PC-9 (cell line): ENCODE measurements at regions of chr12 and their contacts with region 1.

Region 1: GRCh38 chr12:9673404-9674225 is 4.1 kb downstream of the CLEC2D start:
- DNase-seq: peak; percentile 95 to 96
- H3K4me3 ChIP-seq: peak overlapping the region; percentile 5; the same call in 1 of the 2 replicates
- H3K27ac ChIP-seq: peak overlapping the region; percentile 79
- H3K4me1 ChIP-seq: peaks cover 35% of the 10 kb centered on the region
- H3K27me3 ChIP-seq: no peaks in the 10 kb centered on the region
- CTCF ChIP-seq: no peak

Region 2: DNA sequence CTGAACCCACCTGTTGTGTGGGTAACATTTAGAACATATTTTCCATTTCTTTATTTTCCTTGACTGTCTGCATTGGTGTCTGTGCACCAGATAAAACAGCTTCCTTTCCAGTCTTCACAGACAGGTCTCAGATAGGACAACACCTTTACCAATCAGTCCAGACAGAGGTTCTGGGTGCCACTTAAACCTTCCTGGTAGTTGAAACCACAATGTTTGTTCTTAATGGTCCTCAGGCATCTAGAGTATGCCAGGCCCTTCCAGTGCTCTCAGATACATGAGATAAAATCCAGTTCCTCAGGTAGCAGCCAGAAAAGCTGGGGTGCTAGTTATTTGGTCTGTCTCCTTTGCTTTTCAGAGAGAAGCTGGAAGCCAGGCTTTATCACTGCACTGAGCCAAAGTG is 11.1 kb before region 1 on chr12:
- CTCF ChIA-PET with region 1: interaction called, 4 read pairs
- POLR2A ChIA-PET with region 1: no interaction called
- intact Hi-C with region 1: loop called (anchors 1 kb)
- DNase-seq: peak; percentile 63 to 87
- H3K4me3 ChIP-seq: no peak overlapping the region
- H3K27ac ChIP-seq: peak overlapping the region; percentile 43
- H3K4me1 ChIP-seq: peaks cover 27% of the 10 kb centered on the region
- H3K27me3 ChIP-seq: no peaks in the 10 kb centered on the region
- CTCF ChIP-seq: no peak

Region 3: DNA sequence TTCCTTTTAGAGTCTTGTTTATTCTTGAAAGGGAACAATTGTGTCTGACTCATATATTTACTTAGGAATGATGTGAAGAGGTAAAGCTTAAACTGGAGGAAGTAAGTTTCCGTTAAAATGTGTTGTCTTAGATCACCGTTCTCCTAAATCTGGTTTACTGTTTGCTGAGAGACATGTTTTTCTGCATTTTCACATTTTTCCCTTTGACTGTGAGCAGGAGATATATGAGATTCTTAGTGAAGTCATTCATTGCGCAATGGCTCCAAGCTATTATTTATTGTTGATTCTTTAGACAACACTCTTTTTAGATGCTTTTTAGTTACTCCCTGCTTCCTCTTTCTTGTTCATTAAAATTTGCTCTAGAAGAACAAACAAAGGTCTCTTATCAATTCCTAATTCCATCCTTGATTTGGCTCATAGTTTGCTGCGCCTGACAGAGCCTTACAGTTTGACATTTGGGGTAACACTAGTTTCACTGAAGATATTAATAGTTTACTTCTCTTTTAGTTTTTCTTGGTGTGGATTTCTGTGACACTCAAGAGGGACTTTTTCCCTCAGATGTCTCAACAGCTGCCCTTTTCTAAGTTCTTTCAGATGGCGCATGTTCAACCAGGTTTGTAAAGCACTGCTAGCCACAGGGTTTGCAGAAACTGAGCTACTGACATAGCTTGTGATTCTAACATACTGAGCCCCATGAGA is 47.9 kb after region 1 on chr12:
- CTCF ChIA-PET with region 1: no interaction called
- POLR2A ChIA-PET with region 1: interaction called, 5 read pairs
- intact Hi-C with region 1: loop called (anchors 5 kb)
- DNase-seq: peak in 1 of 2 experiments; percentile 90
- H3K4me3 ChIP-seq: no peak overlapping the region
- H3K27ac ChIP-seq: peak overlapping the region; percentile 69
- H3K4me1 ChIP-seq: peaks cover 25% of the 10 kb centered on the region
- H3K27me3 ChIP-seq: no peaks in the 10 kb centered on the region
- CTCF ChIP-seq: no peak

Region 4: DNA sequence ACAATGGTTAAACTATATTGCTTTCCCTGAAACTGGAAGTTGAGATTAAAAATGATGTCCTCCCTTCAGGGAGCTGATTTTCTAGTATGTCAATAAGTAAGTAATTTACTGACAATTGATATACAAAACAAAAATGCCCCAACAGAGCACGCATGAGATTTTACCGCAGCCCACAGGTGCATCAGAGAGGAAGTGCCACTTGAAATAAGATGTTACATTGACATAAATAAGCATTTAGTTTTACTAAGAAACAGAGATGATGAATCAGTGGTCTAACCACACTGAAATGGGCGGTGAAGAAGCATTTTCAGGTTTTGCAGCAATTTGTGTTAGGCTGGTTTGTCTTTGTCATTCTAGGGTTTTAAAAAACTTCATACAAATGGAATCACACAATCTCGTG is 68.1 kb after region 1 on chr12:
- CTCF ChIA-PET with region 1: interaction called, 3 read pairs
- POLR2A ChIA-PET with region 1: no interaction called
- intact Hi-C with region 1: loop called (anchors 2 kb)
- DNase-seq: no peak
- H3K4me3 ChIP-seq: no peak overlapping the region
- H3K27ac ChIP-seq: no peak overlapping the region
- H3K4me1 ChIP-seq: peaks cover 27% of the 10 kb centered on the region
- H3K27me3 ChIP-seq: no peaks in the 10 kb centered on the region
- CTCF ChIP-seq: no peak